ENCODE measurements at regions of chr6 and their contacts with region 1.

Region 1: DNA sequence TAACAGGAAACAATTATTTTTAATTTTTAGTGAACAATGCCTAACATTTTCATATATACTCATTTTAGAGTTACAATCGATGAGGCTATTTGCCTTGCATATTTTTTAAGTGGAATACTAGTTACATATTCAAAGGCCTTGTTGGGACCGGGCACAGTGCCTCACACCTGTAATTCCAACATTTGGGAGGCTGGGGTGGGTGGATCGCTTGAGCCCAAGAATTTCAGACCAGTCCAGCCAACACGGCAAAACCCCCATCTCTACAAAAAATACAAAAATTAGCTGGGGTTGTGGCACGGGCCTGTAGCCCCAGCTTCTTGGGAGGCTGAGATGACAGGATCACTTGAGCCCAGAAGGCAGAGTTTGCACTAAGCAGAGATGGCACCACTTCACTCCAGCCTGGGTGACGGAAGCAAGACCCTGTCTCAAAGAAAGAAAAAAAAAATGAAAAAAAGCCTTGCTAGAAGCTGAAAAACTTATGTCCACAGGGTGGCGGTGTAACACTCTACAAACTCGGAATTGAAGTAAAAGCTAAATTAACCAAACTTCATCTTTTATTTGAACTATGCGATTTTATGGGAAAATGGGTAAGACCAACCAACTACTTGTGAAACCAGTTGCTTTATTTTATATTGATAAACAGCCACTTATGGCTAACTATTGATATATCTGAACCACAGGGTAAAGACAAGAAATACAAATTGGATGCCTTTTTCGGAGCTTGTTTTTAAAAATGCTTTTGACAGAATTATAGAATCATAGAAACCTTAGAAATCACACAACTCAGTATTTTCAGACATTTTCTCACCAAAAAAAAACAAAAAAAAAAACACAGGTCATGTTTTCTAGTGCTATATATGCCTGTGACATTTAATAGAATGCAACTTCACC is 24.1 kb upstream of the ROS1 start:
- DNase-seq: peak; percentile 29
- ATAC-seq: peak; percentile 41 to 49

Region 2: GRCh38 chr6:117555882-117556498 is 106.2 kb after region 1 on chr6:
- intact Hi-C with region 1: loop called (anchors 2 to 5 kb)
- DNase-seq: peak; percentile 31
- ATAC-seq: no peak

Region 3: GRCh38 chr6:117602151-117602898 is 152.5 kb after region 1 on chr6 and contains the start of gene GOPC:
- intact Hi-C with region 1: loop called (anchors 2 to 5 kb)
- DNase-seq: peak; percentile 97
- ATAC-seq: peak; percentile 99 to 100
- total RNA-seq, gene GOPC: 18.3 to 20.6 TPM